ENCODE measurements at regions of chr15 and their contacts with region 1.

Region 1: GRCh38 chr15:93030430-93031105 is 58.4 kb downstream of the RGMA start:
- DNase-seq: peak; percentile 79 to 87
- H3K4me3 ChIP-seq: no peak overlapping the region
- H3K27ac ChIP-seq: peak overlapping the region; percentile 88 to 93
- H3K4me1 ChIP-seq: peaks cover 5 to 53% (median 48%) of the 10 kb centered on the region in 4 donors
- H3K27me3 ChIP-seq: no peaks in the 10 kb centered on the region
- CTCF ChIP-seq: peak; percentile 88

Region 2: GRCh38 chr15:92797168-92797951 is 233.2 kb before region 1 on chr15:
- intact Hi-C with region 1: loop called (anchors 10 kb)
- DNase-seq: no peak
- H3K4me3 ChIP-seq: no peak overlapping the region
- H3K27ac ChIP-seq: peak overlapping the region; percentile 52 to 63
- H3K4me1 ChIP-seq: peaks cover 3 to 25% (median 16%) of the 10 kb centered on the region in 4 donors
- H3K27me3 ChIP-seq: no peaks in the 10 kb centered on the region
- CTCF ChIP-seq: peak; percentile 68 to 81

Region 3: DNA sequence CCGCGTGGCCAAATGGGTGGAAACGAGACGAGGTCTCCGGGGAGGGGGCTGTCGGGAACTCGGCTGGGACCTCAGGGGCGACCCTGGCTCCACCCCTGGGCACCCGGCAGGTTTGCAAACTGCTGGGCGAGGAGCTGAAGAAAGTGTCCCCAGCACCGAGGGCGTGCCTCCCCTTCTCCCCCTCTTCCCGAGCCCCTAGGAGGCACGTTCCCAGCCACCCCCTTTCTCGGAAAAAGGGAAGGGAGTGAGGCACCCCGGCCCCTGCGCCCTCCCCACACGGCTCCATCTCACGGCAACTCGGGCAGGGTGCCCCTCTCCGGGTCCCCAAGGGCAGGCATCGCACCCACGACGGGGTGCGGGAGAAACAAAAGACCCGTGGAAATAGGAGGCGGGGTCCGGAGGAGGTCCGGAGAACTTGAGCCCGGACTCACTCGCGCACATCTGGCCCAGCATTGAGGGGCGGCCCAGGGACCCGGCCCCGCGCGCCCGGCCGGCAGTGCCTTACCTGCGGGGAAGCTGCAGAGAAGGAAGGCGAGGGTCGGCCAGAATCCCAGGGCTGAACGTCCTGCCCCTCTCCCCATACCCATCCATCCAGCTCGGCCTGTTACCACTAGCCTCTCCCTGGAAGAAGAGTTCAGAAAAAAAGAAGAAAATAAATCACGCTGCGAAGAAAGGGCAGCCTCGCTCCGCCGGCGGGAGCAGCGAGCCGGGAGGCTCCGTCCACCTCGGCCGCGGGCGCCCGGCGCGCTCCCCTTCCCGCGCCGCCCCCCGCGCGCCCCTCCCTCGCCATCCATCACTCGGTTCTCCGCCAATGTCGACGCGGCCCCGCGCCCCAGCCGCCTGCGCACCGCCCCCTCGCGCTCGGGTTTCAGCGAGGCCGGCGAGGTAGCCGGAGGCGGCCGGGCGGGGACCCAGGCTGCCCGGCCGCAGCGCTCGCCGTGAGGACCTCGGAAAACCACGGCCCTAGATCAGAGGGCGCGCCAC is 42.1 kb after region 1 on chr15:
- intact Hi-C with region 1: loop called (anchors 10 kb)
- DNase-seq: peak; percentile 76 to 93
- H3K4me3 ChIP-seq: peak overlapping the region; percentile 81 to 85
- H3K27ac ChIP-seq: peak overlapping the region; percentile 79 to 83
- H3K4me1 ChIP-seq: peaks cover 0 to 44% (median 31%) of the 10 kb centered on the region in 4 donors
- H3K27me3 ChIP-seq: no peaks in the 10 kb centered on the region
- CTCF ChIP-seq: peak in 1 of 2 experiments; percentile 5

Region 4: GRCh38 chr15:94119923-94120775 is 1089.6 kb after region 1 on chr15:
- intact Hi-C with region 1: loop called (anchors 5 kb)
- DNase-seq: peak; percentile 72 to 73
- H3K4me3 ChIP-seq: no peak overlapping the region
- H3K27ac ChIP-seq: peak overlapping the region; percentile 34 to 42
- H3K4me1 ChIP-seq: peaks cover 0 to 15% (median 4%) of the 10 kb centered on the region in 4 donors
- H3K27me3 ChIP-seq: no peaks in the 10 kb centered on the region
- CTCF ChIP-seq: peak; percentile 85 to 95

Region 5: GRCh38 chr15:94324117-94324826 is 1293.7 kb after region 1 on chr15:
- intact Hi-C with region 1: loop called (anchors 10 kb)
- DNase-seq: no peak
- H3K4me3 ChIP-seq: no peak overlapping the region
- H3K27ac ChIP-seq: no peak overlapping the region
- H3K4me1 ChIP-seq: no peaks in the 10 kb centered on the region
- H3K27me3 ChIP-seq: no peaks in the 10 kb centered on the region
- CTCF ChIP-seq: peak; percentile 82 to 89